Activated T-helper 2 cell treated with anti-CD3 and anti-CD28 coated beads, Interferon-gamma antibody, Interleukin-2, Interleukin-4, amounts not matched to agents 10 μg/mL and 5 μg/mL and 100 μg/mL, durations not matched to agents 14 hours and 24 hours and 36 hours (primary cell): ENCODE measurements at regions of chr20 and their contacts with region 1.

Region 1: DNA sequence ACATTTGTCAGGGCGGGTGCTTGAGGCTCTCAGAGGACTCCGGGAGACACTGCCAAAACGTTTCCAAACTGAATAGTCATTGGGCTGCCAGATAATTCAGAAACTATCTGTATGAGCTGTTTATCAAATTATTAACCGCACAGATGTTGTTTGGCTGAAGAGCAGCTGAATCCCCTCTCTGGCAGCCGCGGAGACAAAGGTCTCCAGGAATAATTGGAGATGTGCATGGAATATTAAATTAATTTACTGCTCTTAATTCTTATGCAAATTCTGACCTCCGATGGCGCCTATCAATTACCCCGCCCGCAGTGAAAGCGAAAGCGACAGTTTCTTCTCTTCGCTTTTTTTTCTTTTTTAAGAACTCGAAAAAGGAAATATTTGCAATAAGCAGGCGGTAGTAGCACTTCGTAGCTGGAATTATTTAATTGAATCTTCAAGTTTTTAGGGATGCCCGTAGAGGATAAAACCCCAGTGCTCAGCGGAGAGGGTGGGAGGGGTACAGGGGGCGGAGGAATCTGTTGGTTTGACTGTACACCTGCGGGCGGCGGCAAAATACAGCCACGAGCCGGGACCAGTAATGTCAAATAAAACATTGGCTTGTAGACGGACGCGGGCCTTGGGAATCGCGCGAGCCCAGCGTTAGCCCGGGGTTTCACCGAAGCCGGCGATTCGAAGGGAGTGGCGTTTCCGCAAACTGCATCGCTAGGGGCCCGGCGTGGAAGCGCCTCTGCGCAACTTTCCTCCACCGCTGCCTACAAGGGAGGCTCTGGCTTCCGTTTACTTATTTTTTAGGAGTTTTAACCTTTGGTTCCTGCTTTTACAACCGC is 6.2 kb downstream of the LINC00237 start:
- DNase-seq: peak; percentile 45
- H3K4me3 Mint-ChIP-seq: peak overlapping the region; percentile 83
- H3K27ac Mint-ChIP-seq: no peak overlapping the region
- H3K4me1 Mint-ChIP-seq: peaks cover 33% of the 10 kb centered on the region
- H3K27me3 Mint-ChIP-seq: peaks cover 80% of the 10 kb centered on the region

Region 2: DNA sequence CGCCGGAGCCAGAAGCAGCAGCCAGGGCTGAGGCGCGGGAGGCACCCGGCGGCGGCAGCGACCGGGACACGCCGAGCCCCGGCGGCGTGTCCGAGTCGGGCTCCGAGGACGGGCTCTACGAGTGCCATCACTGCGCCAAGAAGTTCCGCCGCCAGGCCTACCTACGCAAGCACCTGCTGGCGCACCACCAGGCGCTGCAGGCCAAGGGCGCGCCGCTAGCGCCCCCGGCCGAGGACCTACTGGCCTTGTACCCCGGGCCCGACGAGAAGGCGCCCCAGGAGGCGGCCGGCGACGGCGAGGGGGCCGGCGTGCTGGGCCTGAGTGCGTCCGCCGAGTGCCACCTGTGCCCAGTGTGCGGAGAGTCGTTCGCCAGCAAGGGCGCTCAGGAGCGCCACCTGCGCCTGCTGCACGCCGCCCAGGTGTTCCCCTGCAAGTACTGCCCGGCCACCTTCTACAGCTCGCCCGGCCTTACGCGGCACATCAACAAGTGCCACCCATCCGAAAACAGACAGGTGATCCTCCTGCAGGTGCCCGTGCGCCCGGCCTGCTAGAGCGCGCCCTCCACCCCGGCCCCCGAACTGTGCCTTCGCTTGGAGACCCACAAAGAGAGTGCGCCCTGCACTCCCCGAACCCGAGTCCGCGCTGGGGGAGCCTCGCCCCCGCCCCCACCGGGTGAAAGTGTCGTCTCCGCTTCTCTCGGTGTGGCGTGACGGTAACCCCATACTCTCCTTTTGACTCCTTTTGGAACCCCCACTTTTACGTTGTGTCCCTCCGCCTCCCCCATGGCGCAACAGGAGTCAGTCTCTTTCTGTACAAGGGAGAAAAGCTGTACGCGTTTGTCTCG is 730.5 kb before region 1 on chr20:
- intact Hi-C with region 1: loop called (anchors 5 kb)
- DNase-seq: no peak
- H3K4me3 Mint-ChIP-seq: peak overlapping the region; percentile 84
- H3K27ac Mint-ChIP-seq: peak overlapping the region; percentile 56
- H3K4me1 Mint-ChIP-seq: peaks cover 25% of the 10 kb centered on the region
- H3K27me3 Mint-ChIP-seq: peaks cover 51% of the 10 kb centered on the region

Region 3: DNA sequence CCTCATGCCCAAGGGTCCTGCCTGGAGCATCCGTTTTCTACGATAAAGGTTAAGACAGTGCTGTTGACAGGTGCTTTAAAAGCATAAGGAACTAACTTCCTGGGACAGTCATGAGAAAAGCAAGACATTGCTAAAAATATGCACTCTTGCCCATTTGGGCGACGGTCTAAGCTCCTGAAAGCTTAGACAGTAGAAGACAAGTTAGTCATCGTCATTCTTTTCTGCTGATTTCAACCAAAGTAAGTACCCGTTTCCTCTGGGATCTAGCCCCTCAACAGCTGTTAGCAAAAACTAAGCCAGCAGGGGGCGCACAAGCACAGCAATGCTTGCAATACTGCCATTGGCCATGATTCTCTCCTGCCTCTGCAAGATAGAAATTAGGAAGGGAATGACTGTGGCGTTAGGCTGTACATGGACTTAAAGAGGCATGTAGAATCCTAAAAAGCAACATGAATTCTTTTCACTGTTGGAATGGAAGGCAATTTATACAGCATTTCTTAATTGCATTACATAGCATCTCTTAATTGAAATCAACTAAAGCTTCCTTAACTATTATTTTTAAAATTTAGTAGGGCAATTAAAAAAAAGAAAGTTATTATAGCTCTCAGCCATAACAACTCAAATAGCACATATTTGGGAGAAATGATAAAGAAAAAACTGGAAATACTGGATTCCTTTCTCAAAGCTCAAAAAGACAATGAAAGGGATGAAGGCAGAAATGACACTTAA is 239.7 kb before region 1 on chr20:
- intact Hi-C with region 1: loop called (anchors 10 kb)
- DNase-seq: peak; percentile 61
- H3K4me3 Mint-ChIP-seq: no peak overlapping the region
- H3K27ac Mint-ChIP-seq: no peak overlapping the region
- H3K4me1 Mint-ChIP-seq: no peaks in the 10 kb centered on the region
- H3K27me3 Mint-ChIP-seq: peaks cover 7% of the 10 kb centered on the region

Region 4: DNA sequence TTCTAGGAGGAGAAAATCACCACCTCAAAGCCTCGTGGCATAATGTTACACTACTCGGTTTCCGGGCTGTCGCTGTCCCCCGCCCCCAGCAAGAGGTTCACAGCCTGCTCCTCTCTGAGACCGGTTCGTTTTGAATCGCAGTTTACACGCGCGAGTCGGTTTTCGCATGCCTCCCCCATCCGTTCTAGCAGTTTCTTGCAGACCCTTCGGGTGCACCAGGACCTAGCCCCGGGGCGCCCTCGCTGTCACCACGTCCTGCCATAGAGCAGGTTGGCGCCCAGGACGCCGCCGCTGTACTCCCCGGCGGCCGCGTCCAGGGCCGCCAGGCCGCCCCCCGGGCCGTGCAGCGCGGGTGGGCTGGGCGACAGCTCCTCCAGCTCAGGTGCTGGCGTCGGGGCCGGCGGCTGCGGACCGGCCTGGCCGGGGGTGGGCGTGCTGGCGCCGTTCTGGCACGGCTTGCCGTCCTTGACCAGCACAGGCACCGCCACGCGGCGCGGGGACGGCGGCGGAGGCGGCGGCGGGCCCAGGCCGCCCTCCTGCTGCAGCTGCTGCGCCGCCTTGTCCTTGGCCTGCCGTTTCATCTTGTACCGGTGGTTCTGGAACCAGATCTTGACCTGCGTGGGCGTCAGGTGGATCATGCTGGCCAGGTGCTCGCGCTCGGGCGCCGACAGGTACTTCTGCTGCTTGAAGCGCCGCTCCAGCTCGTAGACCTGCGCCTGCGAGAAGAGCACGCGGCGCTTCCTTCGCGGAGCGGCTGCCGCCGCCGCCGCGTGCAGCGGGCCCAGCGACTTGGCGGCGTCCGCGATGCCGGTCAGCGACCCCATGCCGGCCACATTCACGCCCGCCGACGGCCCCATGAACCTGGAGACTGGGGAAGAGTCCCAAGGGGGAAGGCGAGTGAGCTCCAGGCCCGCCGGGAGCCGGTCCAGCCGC is 296.0 kb after region 1 on chr20:
- intact Hi-C with region 1: loop called (anchors 2 kb)
- DNase-seq: peak; percentile 24
- H3K4me3 Mint-ChIP-seq: peak overlapping the region; percentile 56
- H3K27ac Mint-ChIP-seq: peak overlapping the region; percentile 46
- H3K4me1 Mint-ChIP-seq: peaks cover 20% of the 10 kb centered on the region
- H3K27me3 Mint-ChIP-seq: peaks cover 74% of the 10 kb centered on the region

Region 5: GRCh38 chr20:21707999-21708737 is 608.2 kb after region 1 on chr20:
- intact Hi-C with region 1: loop called (anchors 2 kb)
- DNase-seq: no peak
- H3K4me3 Mint-ChIP-seq: no peak overlapping the region
- H3K27ac Mint-ChIP-seq: no peak overlapping the region
- H3K4me1 Mint-ChIP-seq: no peaks in the 10 kb centered on the region
- H3K27me3 Mint-ChIP-seq: peaks cover 74% of the 10 kb centered on the region

Region 6: DNA sequence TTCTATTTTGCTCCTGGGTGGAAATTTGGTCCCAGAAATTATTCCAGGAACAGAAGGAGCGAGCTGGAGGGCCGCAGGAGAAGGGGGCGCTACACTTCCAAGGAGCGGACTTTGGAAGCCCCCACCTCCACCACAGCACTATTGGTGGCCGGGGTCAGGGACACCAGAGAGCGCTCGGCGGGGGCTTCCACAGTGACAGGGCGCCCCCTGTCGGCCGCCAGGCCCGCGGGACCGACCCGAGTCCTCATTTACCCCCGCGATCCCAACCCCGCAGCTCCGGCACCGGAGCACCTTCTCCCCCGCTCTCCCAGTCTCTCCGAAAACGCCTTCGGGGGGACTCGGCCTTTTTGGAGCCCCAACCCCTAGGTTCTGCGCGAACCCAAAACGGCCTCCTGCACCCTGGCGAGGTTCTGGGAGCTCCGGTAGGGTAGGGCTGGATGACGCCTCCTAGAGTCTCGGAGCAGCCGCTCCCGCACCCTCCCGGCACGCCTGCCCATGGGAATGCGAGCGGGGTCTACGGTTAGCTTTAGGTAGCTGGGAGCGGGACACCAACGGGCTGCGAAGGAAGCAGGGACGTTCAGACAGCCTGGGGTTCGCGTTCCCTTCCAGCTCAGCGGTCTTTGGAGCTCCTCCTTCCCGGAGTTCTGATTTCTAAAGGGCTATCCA is 1486.8 kb after region 1 on chr20:
- intact Hi-C with region 1: loop called (anchors 5 kb)
- DNase-seq: no peak
- H3K4me3 Mint-ChIP-seq: no peak overlapping the region
- H3K27ac Mint-ChIP-seq: no peak overlapping the region
- H3K4me1 Mint-ChIP-seq: no peaks in the 10 kb centered on the region
- H3K27me3 Mint-ChIP-seq: peaks cover 48% of the 10 kb centered on the region